Prostate gland (tissue), 2 donors: ENCODE measurements at regions of chr9 and their contacts with region 1.

Region 1: DNA sequence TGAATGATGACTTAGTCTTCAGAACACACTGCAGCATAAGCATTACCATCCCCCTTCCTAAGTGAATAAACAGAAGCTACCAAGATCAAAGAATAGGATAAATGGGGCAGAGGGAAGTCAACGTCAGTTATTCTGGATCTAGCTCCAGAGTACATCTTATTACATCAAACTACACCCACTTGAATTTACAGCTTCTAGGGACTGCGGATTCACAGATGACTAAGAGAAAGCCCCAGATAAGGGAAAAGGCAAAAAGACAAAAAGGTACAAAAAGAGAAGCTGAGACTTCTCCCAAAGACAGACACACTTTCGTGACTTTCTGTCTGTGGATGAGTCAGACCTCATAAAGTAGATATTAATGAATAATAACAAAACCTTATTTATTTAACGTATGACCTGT is 457.9 kb upstream of the BRINP1 start:
- DNase-seq: no peak
- H3K4me3 ChIP-seq: no peak overlapping the region
- H3K27ac ChIP-seq: no peak overlapping the region
- H3K4me1 ChIP-seq: no peaks in the 10 kb centered on the region
- H3K27me3 ChIP-seq: no peaks in the 10 kb centered on the region
- CTCF ChIP-seq: no peak
- POLR2A ChIP-seq: no peak

Region 2: GRCh38 chr9:119522381-119522780 is 304.7 kb before region 1 on chr9:
- intact Hi-C with region 1: no loop called
- DNase-seq: no peak
- H3K4me3 ChIP-seq: no peak overlapping the region
- H3K27ac ChIP-seq: no peak overlapping the region
- H3K4me1 ChIP-seq: no peaks in the 10 kb centered on the region
- H3K27me3 ChIP-seq: no peaks in the 10 kb centered on the region
- CTCF ChIP-seq: no peak
- POLR2A ChIP-seq: no peak

Region 3: GRCh38 chr9:119758241-119758640 is 68.9 kb before region 1 on chr9:
- intact Hi-C with region 1: loop called (anchors 10 kb)
- DNase-seq: peak; percentile 33
- H3K4me3 ChIP-seq: no peak overlapping the region
- H3K27ac ChIP-seq: no peak overlapping the region
- H3K4me1 ChIP-seq: no peaks in the 10 kb centered on the region
- H3K27me3 ChIP-seq: no peaks in the 10 kb centered on the region
- CTCF ChIP-seq: no peak
- POLR2A ChIP-seq: no peak